AG04450 (cell line): ENCODE measurements at regions of chr11 and their contacts with region 1.

Region 1: GRCh38 chr11:19553683-19554333 is 158.8 kb upstream of the NAV2 start:
- DNase-seq: peak; percentile 44
- H3K4me3 ChIP-seq: no peak overlapping the region
- H3K27ac ChIP-seq: no peak overlapping the region
- H3K27me3 ChIP-seq: peaks cover 31% of the 10 kb centered on the region
- CTCF ChIP-seq: peak; percentile 91

Region 2: GRCh38 chr11:19071255-19071654 is 482.6 kb before region 1 on chr11:
- CTCF ChIA-PET with region 1: interaction called, 41 read pairs
- POLR2A ChIA-PET with region 1: no interaction called
- DNase-seq: peak; percentile 53
- H3K4me3 ChIP-seq: peak overlapping the region; percentile 41
- H3K27ac ChIP-seq: no peak overlapping the region
- H3K27me3 ChIP-seq: peaks cover 11% of the 10 kb centered on the region
- CTCF ChIP-seq: peak; percentile 97

Region 3: DNA sequence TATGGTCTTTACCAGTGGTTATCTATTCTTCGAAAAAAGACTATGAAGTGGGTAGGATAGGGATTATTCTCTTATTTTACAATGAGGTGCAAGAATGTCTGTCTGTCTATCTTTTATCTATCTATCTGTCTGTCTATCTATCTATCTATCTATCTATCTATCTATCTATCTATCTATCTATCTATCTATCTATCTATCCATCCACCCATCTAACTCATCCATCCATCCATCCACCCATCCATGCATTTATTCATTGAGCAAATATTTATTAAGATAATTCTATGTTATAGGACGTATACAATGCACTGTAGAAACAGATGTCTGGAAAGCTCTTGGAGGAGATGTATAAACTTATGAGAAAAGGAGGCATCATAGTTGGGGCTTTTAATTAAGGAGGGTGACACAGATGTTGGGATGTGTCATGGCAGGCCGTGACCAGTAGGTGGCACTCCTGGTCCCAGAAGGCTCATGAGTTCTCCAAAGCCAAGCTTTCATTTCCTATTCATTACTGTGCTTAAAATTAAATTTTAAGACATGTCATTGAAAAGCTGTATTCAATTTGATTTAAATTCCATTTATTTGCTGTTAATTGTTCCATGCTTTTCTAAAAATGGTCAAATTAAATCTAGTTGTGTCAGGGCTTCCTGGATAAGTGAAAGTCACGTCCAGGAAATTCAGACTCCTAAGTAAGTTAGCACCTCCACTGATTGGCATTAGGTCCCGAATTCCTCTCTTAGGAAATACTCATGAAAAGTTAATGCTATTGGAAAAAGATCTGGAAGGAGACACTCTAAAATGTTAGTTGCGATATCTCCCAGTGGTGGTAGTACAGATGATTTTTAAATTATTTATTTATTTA is 294.1 kb before region 1 on chr11:
- CTCF ChIA-PET with region 1: interaction called, 132 read pairs
- POLR2A ChIA-PET with region 1: no interaction called
- DNase-seq: peak; percentile 26
- H3K4me3 ChIP-seq: no peak overlapping the region
- H3K27ac ChIP-seq: no peak overlapping the region
- H3K27me3 ChIP-seq: peaks cover 32% of the 10 kb centered on the region
- CTCF ChIP-seq: peak; percentile 96

Region 4: DNA sequence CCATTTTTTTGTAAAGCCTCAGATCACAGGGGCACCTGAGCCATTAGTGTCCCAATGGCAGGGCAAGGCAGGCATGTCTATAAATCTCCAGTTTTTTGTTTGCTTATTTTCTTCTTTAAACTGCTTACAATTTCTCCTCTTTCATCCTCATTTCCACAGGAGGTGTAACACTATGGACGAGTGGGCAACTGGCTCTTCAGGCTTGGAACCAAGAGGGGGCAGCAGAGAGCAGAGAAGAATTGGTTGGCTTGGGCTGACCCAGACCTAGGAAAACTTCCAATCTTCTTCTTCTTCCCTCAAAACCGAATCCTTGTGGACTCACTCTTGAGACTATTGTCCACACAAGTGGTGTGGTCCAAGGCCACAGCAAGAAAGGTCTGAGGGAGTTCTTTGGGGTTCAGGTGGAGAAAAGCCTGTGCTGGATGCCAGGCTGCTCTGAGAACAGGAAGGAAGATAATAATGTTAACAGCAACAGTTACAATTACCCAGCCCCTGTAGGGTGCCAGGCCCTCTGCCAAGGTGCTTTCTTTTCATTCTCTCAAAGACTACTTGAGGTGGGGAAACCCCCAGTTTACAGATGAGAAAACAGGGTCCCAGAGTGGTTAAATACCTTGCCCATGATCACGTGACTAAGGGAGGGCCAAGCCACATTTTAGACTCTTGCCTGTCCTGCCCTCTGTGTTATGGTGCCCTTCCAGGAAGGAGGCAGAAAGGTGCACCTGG is 242.3 kb before region 1 on chr11:
- CTCF ChIA-PET with region 1: interaction called, 57 read pairs
- POLR2A ChIA-PET with region 1: no interaction called
- DNase-seq: peak; percentile 13
- H3K4me3 ChIP-seq: no peak overlapping the region
- H3K27ac ChIP-seq: no peak overlapping the region
- H3K27me3 ChIP-seq: peaks cover 27% of the 10 kb centered on the region
- CTCF ChIP-seq: peak; percentile 97

Region 5: GRCh38 chr11:19326499-19326898 is 227.3 kb before region 1 on chr11:
- CTCF ChIA-PET with region 1: interaction called, 105 read pairs
- POLR2A ChIA-PET with region 1: no interaction called
- DNase-seq: no peak
- H3K4me3 ChIP-seq: no peak overlapping the region
- H3K27ac ChIP-seq: no peak overlapping the region
- H3K27me3 ChIP-seq: peaks cover 41% of the 10 kb centered on the region
- CTCF ChIP-seq: peak; percentile 54

Region 6: DNA sequence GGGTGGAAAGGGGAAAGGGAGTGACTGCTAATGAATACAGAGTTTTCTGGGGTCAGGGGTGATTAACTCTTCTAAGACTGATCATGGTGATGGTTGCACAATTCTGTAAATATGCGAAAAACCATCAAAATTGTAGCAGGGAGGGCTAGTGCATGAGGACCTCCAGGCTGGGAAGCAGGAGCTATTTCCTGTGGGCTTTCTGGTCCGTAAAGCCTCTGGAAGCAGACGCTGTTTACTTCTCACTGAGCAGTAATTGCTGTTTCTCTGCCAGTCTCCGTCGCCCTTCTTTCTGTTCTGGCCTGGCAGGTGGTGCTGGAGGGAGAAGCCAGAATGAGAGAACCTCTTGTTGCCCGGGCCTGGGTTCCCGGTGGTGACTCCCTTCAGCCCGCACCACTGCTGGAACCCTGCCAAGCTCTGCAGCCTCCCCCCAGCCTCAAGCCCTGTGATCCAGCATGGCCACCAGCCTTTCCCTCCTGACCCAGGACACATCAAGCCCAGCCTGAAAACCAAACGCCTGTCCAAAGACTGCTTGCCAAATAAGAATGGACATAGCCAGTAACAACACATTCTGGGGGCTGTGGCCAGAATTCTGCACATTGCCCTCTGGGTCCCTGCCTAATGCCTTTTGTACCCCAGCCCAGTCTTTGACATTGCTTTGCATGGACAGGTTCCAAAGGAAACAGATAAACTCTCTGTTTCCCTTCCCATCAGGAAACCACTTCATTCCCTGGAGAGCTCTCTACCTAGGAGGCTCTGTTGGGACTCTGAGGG is 42.2 kb before region 1 on chr11:
- CTCF ChIA-PET with region 1: no interaction called
- POLR2A ChIA-PET with region 1: no interaction called
- DNase-seq: no peak
- H3K4me3 ChIP-seq: no peak overlapping the region
- H3K27ac ChIP-seq: no peak overlapping the region
- H3K27me3 ChIP-seq: peaks cover 40% of the 10 kb centered on the region
- CTCF ChIP-seq: no peak

Region 7: DNA sequence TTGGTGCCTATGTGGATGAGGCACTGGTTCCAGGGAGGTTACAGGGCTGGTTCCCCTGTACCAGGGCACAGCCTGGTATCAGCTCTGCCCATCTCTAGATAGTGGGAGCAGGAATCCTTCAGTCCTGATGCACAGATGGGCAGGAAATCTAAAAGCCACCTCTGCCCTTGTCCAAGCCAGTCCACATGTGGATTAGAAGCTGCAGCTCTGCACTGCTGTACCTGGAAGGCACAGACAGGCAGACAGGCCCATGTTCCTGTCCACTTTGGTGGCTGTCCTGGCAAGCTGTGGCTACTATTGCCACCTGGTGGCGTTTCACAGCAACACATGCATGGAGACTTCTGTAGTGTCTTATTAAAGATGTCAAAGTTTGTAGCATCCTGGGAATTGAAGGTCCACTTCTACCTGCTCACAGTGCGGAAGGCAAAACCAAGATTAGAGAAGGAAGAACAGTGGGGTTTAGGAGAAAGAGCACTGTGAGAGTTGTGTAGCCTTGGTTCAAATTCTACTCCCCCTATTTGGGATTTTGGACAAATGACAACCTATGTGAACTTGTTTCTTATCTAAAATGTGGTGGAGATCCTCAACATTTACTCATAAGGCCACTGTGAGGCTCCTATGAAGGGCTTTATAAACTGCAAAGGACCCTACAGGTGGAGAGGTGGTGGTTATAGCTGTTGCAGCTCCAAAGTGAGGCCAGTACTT is 188.9 kb after region 1 on chr11:
- CTCF ChIA-PET with region 1: interaction called, 158 read pairs
- POLR2A ChIA-PET with region 1: no interaction called
- DNase-seq: peak; percentile 50
- H3K4me3 ChIP-seq: no peak overlapping the region
- H3K27ac ChIP-seq: no peak overlapping the region
- H3K27me3 ChIP-seq: no peaks in the 10 kb centered on the region
- CTCF ChIP-seq: peak; percentile 88

Region 8: DNA sequence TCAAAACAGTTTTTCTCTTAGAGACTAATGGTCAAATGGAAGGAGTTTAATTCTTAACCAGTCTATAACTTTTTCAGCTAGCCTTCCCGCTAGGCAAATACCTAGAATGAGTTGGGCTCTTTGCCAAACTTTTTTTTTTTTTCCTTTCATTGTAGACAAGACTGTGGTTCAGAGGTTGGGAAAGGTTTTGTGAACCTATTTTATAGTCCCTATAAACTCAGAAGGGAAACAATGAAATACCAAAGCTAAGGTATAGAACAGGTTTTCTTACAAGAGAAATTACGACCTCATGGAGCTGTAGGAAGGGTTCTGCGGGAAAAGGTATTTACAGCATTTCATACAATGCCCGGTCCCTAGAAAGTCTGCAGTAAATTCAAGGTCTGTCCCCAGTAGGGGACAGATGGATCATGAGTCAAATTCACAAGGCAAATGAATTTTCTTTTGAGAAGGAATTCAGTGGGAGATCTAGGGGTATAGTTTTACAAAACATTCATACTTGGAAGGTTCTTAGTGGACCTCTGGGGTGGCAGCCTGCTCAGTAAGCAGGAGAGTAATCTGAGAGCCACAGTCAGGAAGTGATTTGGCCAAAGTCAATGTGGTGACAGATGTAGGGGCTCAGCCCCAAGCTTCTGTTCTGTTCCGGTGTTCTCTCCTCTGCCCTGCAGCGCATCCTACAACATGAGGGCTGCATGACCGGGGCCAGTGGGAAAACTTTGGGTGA is 459.7 kb after region 1 on chr11:
- CTCF ChIA-PET with region 1: no interaction called
- POLR2A ChIA-PET with region 1: no interaction called
- DNase-seq: no peak
- H3K4me3 ChIP-seq: no peak overlapping the region
- H3K27ac ChIP-seq: no peak overlapping the region
- H3K27me3 ChIP-seq: no peaks in the 10 kb centered on the region
- CTCF ChIP-seq: no peak

Region 9: DNA sequence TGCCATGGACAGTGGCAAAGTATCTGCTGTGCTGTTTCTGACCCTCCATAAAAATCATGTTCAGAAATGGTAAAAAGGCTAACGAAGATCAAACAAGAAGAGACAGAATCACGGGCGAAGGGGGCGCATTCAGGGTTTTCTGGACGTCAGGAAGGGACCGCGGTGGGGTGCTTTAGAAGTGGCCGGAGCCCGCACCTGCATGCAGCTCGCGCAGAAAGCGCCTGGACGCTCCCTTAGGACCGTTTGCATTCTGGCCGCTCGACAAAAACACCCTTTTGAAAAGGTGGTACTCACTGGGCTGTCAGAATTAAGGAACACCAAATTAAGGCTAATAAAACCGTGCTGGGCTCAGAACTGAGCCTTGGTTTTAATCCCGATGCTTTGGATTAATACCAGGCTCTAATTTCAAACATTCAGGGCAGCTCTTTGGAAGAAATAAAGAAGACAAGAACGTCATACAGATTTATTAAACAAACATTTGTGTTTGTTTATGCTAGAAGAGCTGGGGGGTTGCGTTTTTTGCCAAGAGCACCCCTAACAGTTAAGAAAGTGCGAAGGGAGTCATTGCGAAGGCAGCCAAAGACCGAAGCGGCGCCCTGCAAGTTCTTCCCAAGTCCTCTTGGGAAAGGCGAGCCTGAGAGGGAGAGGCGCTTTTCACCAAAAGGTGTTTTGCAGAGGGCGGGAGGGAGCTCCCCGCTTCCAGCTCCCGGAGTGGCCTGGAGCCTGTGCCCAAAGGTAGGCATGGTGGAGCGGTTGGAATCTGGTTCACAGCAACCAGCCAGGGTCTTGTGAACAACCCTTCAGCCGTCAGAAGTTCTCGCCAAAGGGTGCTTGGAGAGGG is 654.2 kb after region 1 on chr11:
- CTCF ChIA-PET with region 1: no interaction called
- POLR2A ChIA-PET with region 1: no interaction called
- DNase-seq: no peak
- H3K4me3 ChIP-seq: no peak overlapping the region
- H3K27ac ChIP-seq: no peak overlapping the region
- H3K27me3 ChIP-seq: peaks cover 31% of the 10 kb centered on the region
- CTCF ChIP-seq: no peak